ENCODE measurements at regions of chr10 and their contacts with region 1.

Region 1: GRCh38 chr10:3445648-3446047 is 273.1 kb upstream of the PITRM1 start:
- DNase-seq: peak; percentile 29
- ATAC-seq: peak; percentile 40; the same call in 1 of the 2 replicates
- H3K4me3 ChIP-seq: no peak overlapping the region
- H3K27ac ChIP-seq: no peak overlapping the region; the same call in 1 of the 2 replicates
- H3K4me1 ChIP-seq: peaks cover 5% of the 10 kb centered on the region
- H3K27me3 ChIP-seq: no peaks in the 10 kb centered on the region
- CTCF ChIP-seq: no peak
- POLR2A ChIP-seq: no peak
- RAD21 ChIP-seq: no peak

Region 2: DNA sequence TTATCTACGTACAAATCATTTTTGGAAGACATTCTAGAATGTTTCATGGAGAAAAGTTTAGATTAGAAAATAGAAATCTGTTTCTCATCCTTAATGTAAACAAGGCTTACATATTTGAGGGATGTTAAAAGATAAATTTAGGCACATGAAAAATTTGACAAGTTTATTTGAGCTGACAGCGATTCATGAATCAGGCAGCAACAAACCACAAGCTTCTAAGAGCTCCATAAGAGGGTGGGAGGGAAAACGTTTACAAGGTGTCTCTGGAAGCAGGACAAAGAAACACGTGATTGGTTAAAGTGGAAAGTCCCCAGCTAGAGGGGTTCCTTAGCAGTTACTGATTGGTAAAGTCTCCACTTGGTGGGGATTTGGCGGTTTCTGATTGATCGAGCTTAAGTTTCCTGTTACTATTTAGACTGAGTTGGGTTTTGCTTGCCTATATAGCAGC is 44.1 kb before region 1 on chr10:
- CTCF ChIA-PET with region 1: no interaction called
- POLR2A ChIA-PET with region 1: no interaction called
- dilution Hi-C with region 1: no loop called
- in situ Hi-C with region 1: no loop called
- intact Hi-C with region 1: loop called (anchors 2 kb)
- DNase-seq: peak; percentile 75
- ATAC-seq: peak; percentile 38
- H3K4me3 ChIP-seq: no peak overlapping the region
- H3K27ac ChIP-seq: peak overlapping the region; percentile 22; the same call in 1 of the 2 replicates
- H3K4me1 ChIP-seq: peaks cover 12% of the 10 kb centered on the region
- H3K27me3 ChIP-seq: no peaks in the 10 kb centered on the region
- CTCF ChIP-seq: no peak
- POLR2A ChIP-seq: no peak
- RAD21 ChIP-seq: no peak